RWPE1 (cell line): ENCODE measurements at regions of chr1 and their contacts with region 1.

Region 1: GRCh38 chr1:204989266-204990058 is 53.5 kb upstream of the CNTN2 start:
- DNase-seq: peak; percentile 95
- H3K27ac ChIP-seq: no peak overlapping the region
- CTCF ChIP-seq: peak; percentile 78

Region 2: DNA sequence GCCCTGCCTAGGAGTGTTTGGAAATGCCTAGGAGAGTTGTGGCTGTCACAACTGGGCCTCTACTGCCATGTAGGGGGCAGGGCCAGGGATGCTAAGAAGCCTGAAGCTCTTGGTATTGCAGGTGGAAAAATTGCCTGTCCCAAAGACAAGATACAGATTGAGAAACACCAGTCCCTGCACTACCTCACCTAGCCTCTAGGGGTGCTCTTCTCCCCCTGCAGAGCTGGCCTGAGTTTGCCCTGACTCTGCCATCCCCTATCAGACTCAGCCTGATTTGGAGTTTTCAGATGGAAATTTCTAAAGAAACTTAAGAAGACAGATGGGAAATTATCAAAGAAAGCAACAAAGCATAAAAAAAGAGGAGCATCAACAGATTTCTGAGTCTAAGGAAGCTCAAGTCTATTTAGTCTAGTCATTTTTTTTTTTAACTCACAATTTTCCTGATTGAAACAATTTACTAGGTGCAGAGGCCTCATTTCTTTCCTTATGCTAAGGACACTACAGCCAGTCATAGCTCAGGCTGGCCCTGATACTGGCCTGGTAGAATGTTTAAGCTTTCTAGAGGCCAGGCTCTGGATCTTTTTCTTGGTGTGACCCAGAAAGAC is 242.5 kb before region 1 on chr1:
- CTCF ChIA-PET with region 1: no interaction called
- POLR2A ChIA-PET with region 1: no interaction called
- DNase-seq: peak; percentile 68
- H3K27ac ChIP-seq: no peak overlapping the region
- CTCF ChIP-seq: peak; percentile 87

Region 3: DNA sequence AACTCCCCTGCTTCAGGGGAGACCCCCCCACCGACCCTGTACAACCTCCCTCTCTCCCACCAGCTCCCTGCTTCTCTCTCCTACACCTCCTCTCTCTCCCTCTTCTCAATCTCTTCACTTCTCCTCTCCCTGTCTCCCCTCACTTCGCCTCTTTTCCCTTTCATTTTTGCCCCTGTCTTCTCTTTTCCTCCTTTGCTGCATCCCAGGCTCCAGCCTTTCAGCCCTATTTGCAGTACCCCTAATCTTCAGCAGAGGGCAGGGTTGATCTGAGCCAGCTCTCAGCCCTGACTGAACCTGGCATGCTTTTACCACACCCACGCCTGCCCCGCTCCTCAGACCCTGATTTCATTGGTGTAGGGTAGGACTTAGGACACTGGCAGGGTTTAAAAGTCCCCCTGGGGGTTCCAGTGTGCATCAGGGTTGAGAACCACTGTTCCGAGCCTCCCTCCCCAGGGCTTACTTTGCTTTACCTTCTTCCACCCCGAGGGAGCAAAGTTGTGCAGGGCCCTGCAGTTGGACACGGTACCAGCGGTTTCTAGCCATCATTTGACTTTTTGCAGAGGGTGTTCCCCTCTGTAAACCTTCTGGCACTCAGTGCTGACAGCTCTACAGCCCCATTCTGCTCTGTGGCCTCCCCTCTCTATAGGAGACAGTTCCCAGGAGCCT is 13.8 kb before region 1 on chr1:
- CTCF ChIA-PET with region 1: interaction called, 22 read pairs
- POLR2A ChIA-PET with region 1: no interaction called
- DNase-seq: peak; percentile 89
- H3K27ac ChIP-seq: no peak overlapping the region
- CTCF ChIP-seq: peak; percentile 80

Region 4: DNA sequence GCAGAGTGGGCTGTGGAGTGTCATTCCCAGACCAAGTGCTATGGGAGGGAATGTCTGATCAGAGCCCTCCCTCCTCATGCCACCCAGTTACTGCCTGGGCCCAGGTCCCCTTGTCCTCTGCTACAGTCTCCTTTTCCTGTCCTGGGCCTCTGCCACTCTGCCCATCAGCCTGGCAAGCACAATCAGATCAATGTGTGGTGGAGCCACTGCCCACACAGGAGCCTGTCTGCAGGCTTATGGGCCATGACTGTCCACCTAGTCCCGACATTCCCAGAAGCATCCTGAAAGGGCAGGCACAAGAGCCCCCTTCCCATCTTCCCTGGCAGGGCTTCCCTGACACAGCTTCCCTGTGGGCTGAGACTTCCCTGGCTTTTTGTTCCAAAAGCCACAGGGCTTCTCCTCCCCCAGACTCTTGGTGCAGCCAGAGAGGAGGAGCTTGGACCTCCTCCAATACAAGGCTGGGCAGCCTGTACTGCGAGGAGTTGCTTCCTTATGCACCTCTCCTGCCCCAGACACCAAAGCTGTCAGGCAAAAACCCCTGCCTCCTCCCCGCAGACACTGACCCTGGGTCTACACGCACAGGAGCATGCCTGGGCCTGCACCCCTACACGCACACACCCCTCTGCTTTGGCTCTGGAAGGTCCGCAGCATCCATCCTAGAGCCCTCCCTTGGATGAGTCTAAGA is 24.4 kb after region 1 on chr1:
- CTCF ChIA-PET with region 1: interaction called, 13 read pairs
- POLR2A ChIA-PET with region 1: no interaction called
- DNase-seq: no peak
- H3K27ac ChIP-seq: no peak overlapping the region
- CTCF ChIP-seq: no peak

Region 5: DNA sequence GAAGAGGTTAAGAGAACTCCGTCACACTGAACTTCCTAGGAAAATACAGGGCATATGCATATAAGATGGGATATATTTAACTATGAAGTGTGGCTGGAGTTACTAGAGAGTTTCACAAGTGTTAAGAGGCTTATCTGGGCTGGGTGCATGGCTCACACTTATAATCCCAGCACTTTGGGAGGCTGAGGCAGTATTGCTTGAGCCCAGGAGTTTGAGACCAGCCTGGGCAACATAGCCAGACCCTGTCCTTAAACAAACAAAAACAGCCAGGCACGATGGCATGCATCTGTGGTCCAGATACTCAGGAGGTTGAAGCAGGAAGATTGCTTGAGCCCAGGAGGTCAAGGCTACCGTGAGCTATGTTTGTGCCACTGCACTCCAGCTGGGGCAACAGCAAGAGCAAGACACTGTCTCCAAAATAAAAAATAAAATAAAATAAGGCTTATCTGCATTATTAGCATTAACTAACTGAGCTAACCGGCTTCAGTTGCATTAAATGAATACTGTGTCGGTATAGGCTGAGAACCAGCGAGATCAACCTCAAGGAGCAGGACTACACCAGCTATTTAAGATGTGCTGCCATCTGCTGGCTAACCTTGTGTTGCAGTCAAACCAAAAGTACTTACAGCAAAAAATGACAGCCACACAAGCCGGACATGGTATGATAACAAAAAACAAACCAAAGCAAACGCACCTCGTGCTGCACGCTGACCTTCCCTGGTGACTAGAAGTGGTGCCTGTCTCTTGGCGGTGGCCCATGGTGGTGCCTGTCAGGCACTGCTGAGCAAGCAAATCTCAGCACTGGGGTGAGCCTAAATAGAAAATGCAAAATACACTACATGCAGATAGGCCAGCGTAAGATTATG is 152.0 kb after region 1 on chr1:
- CTCF ChIA-PET with region 1: interaction called, 12 read pairs
- POLR2A ChIA-PET with region 1: no interaction called
- DNase-seq: peak; percentile 78
- H3K27ac ChIP-seq: no peak overlapping the region
- CTCF ChIP-seq: peak; percentile 89